Common myeloid progenitor, CD34-positive (primary cell): ENCODE measurements at regions of chr1 and their contacts with region 1.

Region 1: DNA sequence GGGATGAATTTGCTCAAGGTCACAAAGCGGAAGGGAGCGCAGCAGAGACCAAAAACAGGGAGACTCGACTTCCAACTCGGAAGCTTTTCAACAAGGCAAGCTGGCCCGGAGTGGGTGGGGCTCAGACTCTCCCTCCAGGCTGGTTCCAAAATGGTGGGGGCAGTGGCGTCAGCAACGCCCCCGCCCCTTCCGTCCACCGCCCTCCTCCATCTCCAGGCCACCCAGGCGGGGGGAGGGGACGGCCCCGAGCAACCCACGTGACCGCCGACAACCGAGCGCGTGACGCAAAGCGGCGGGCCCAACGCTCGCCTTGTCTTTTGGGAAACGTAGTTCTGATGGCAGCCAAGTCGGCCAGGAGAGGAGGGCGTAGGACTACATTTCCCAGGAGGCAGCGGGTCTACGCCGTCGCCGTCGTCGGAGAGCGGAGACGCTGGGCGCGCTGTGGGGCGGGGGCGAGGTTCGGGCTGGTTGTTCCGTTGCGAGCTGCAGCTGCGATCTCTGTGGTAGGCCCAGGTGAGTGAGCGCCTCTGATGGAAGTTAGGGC is at the start of gene THRAP3:
- DNase-seq: peak; percentile 100
- H3K4me3 ChIP-seq: peak within 1 kb of the TSS; percentile 88 to 100 (median 93)
- H3K27ac ChIP-seq: peak within 1 kb of the TSS; percentile 95 to 100
- H3K4me1 ChIP-seq: peaks cover 19 to 33% (median 30%) of the 10 kb centered on the region in 4 experiments
- H3K27me3 ChIP-seq: no peaks in the 10 kb centered on the region

Region 2: GRCh38 chr1:36088575-36089443 is 135.3 kb before region 1 on chr1 and contains the start of gene ADPRS:
- CTCF ChIA-PET with region 1: no interaction called
- POLR2A ChIA-PET with region 1: no interaction called
- DNase-seq: peak; percentile 90 to 96 (median 95)
- H3K4me3 ChIP-seq: peak within 1 kb of the TSS; percentile 71 to 95 (median 93)
- H3K27ac ChIP-seq: peak within 1 kb of the TSS; percentile 72 to 82
- H3K4me1 ChIP-seq: peaks cover 3 to 28% (median 23%) of the 10 kb centered on the region in 4 experiments
- H3K27me3 ChIP-seq: peaks cover 0 to 9% (median 5%) of the 10 kb centered on the region in 5 experiments

Region 3: GRCh38 chr1:36155408-36156328 is 68.4 kb before region 1 on chr1 and contains the start of gene MAP7D1:
- CTCF ChIA-PET with region 1: interaction called, 20 read pairs
- POLR2A ChIA-PET with region 1: no interaction called
- DNase-seq: peak; percentile 86 to 91 (median 91)
- H3K4me3 ChIP-seq: peak within 1 kb of the TSS; percentile 71 to 98 (median 88)
- H3K27ac ChIP-seq: peak within 1 kb of the TSS; percentile 90 to 95
- H3K4me1 ChIP-seq: peaks cover 18 to 79% (median 72%) of the 10 kb centered on the region in 4 experiments
- H3K27me3 ChIP-seq: no peaks in the 10 kb centered on the region

Region 4: GRCh38 chr1:36236302-36236701 is 12.2 kb after region 1 on chr1:
- CTCF ChIA-PET with region 1: interaction called, 11 read pairs
- POLR2A ChIA-PET with region 1: interaction called, 4 read pairs
- DNase-seq: no peak
- H3K4me3 ChIP-seq: no peak overlapping the region
- H3K27ac ChIP-seq: peak overlapping the region in 1 of 2 experiments; percentile 19
- H3K4me1 ChIP-seq: no peaks in the 10 kb centered on the region
- H3K27me3 ChIP-seq: no peaks in the 10 kb centered on the region

Region 5: GRCh38 chr1:36247538-36247937 is 23.5 kb after region 1 on chr1:
- CTCF ChIA-PET with region 1: interaction called, 10 read pairs
- POLR2A ChIA-PET with region 1: interaction called, 7 read pairs
- DNase-seq: no peak
- H3K4me3 ChIP-seq: no peak overlapping the region
- H3K27ac ChIP-seq: peak overlapping the region in 1 of 2 experiments; percentile 18
- H3K4me1 ChIP-seq: peaks cover 0 to 3% (median 0%) of the 10 kb centered on the region in 4 experiments
- H3K27me3 ChIP-seq: no peaks in the 10 kb centered on the region